ENCODE measurements at regions of chr9 and their contacts with region 1.

Region 1: GRCh38 chr9:98341157-98342097 is 86.0 kb upstream of the TBC1D2 start:
- DNase-seq: no peak
- H3K4me3 ChIP-seq: no peak overlapping the region
- H3K27ac ChIP-seq: no peak overlapping the region
- H3K4me1 ChIP-seq: no peaks in the 10 kb centered on the region
- H3K27me3 ChIP-seq: no peaks in the 10 kb centered on the region
- CTCF ChIP-seq: no peak

Region 2: GRCh38 chr9:97710356-97711222 is 630.8 kb before region 1 on chr9:
- CTCF ChIA-PET with region 1: no interaction called
- POLR2A ChIA-PET with region 1: no interaction called
- intact Hi-C with region 1: no loop called
- DNase-seq: peak; percentile 59
- H3K4me3 ChIP-seq: no peak overlapping the region
- H3K27ac ChIP-seq: no peak overlapping the region
- H3K4me1 ChIP-seq: peaks cover 43% of the 10 kb centered on the region
- H3K27me3 ChIP-seq: no peaks in the 10 kb centered on the region
- CTCF ChIP-seq: peak; percentile 90

Region 3: GRCh38 chr9:98306384-98307160 is 34.9 kb before region 1 on chr9:
- CTCF ChIA-PET with region 1: no interaction called
- POLR2A ChIA-PET with region 1: interaction called, 19 read pairs
- intact Hi-C with region 1: no loop called
- DNase-seq: peak in 1 of 2 experiments; percentile 31
- H3K4me3 ChIP-seq: no peak overlapping the region
- H3K27ac ChIP-seq: no peak overlapping the region
- H3K4me1 ChIP-seq: no peaks in the 10 kb centered on the region
- H3K27me3 ChIP-seq: no peaks in the 10 kb centered on the region
- CTCF ChIP-seq: no peak

Region 4: DNA sequence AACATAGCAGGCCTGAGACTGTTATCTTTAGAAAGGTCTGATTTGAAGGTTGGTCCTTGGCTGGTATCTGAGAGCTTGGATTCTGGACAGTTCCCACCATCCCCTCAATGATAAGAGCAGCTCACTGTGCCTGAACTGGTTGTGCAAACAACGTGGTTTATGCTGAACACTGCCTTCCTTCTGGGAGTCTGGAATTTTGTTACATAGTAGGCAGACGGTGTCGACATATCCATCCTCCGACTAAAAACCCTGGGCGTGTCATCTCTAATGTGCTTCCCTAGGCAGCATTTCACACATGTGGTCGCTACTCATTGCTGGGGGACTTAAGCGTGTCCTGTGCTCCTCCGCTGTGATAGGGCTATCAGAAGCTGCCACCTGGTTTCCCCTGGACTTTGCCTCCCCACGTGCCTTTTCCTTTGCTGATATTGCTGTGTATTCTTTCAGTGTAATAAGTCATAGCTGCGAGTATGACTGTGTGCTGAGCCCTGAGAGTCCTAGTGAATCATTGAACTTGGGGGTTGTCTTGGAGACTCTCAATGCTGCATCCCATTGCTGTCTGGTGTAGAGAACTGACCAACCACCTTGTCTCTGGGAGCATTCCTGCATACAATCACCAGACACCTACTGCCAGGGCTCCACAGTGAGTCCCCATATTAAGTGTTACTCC is 33.1 kb after region 1 on chr9:
- CTCF ChIA-PET with region 1: no interaction called
- POLR2A ChIA-PET with region 1: no interaction called
- intact Hi-C with region 1: no loop called
- DNase-seq: peak; percentile 35 to 88
- H3K4me3 ChIP-seq: no peak overlapping the region
- H3K27ac ChIP-seq: peak overlapping the region; percentile 71
- H3K4me1 ChIP-seq: peaks cover 37% of the 10 kb centered on the region
- H3K27me3 ChIP-seq: no peaks in the 10 kb centered on the region
- CTCF ChIP-seq: no peak